ENCODE measurements at regions of chr4 and their contacts with region 1.

Region 1: GRCh38 chr4:14771094-14771493 is 231.2 kb upstream of the CPEB2 start:
- DNase-seq: no peak
- ATAC-seq: no peak
- H3K4me3 ChIP-seq: no peak overlapping the region
- H3K27ac ChIP-seq: no peak overlapping the region
- H3K4me1 ChIP-seq: peaks cover 0 to 4% of the 10 kb centered on the region in 2 donors
- H3K27me3 ChIP-seq: no peaks in the 10 kb centered on the region

Region 2: DNA sequence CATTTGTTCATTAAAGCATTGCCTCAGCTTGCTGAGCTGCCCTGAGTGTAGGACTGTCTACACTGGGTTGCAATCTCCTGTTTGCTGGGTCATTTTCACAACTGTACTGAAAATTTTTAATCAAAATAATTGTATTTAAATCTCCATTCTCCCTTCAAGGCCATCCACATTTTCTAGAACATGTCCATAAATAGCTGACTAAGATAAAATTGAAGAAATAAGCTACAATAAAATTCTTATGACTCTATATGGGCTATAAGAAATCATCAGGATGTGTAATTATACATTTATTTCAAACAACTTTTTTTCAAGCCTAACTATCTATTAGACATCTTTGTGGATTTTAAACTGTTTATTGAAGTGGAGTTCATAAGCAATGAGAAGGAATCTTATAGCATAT is 41.5 kb before region 1 on chr4:
- intact Hi-C with region 1: loop called in 1 of 2 experiments (anchors 2 kb)
- DNase-seq: no peak
- ATAC-seq: no peak
- H3K4me3 ChIP-seq: no peak overlapping the region
- H3K27ac ChIP-seq: no peak overlapping the region
- H3K4me1 ChIP-seq: no peaks in the 10 kb centered on the region
- H3K27me3 ChIP-seq: no peaks in the 10 kb centered on the region

Measured in aorta (tissue), 5 donors.